Activated CD4-positive, alpha-beta memory T cell treated with anti-CD3 and anti-CD28 coated beads, Interleukin-2, amount 10 ng/mL, durations not matched to agents 7 days and 5 days (primary cell): ENCODE measurements at regions of chr15 and their contacts with region 1.

Region 1: GRCh38 chr15:40307421-40308211 is at the start of gene PLCB2:
- DNase-seq: peak; percentile 78
- H3K4me3 Mint-ChIP-seq: peak within 1 kb of the TSS; percentile 97
- H3K27ac Mint-ChIP-seq: peak within 1 kb of the TSS; percentile 97
- H3K4me1 Mint-ChIP-seq: peaks cover 43% of the 10 kb centered on the region
- H3K27me3 Mint-ChIP-seq: peaks cover 5% of the 10 kb centered on the region
- total RNA-seq, gene PLCB2: 140 TPM

Region 2: DNA sequence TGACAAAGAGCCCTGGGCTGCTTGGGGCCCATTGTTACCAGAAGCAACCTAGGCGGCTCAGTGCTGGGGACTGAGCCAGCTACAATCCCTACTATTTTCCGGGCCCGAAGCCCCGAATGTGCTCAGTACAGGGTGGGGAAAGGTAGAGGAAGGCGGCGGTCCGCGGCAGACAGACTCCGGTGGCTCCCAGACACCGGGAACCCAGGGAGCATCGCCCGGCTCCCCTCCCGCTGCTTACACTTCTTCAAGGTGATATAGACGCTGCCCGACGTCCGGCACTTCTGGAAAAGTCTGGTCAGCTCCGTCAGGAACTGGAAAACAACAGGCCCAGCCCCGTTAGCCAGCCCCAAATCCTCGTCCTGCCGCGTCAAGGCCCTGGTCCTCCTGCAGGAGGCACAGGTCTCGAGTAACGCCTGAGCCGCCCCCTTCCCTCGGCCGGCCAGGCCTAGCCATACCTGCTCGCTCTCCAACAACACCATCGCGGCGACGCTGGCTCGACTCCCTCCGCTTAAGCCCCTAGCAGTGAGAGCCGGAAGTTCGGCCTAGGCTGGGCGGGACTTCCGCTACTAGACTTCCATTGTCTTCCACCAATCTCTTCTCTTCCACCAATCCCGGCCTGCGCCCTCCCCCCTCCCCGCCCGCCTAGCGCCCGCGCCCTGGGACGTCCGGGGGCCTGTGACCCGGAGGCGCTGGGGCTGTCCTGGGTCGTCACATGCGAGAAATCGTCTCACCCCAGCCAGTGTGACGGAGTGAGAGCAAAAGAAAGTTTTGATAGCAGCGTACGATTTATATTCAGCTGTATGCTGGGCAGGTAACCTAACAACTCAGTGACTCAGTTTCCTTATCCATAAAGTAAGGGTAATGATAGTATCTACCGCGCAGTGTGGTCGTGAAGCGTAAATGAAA is 268.7 kb before region 1 on chr15 and contains the start of gene SRP14:
- CTCF ChIA-PET with region 1: interaction called, 4 read pairs
- POLR2A ChIA-PET with region 1: interaction called, 12 read pairs
- DNase-seq: peak; percentile 94
- H3K4me3 Mint-ChIP-seq: peak within 1 kb of the TSS; percentile 100
- H3K27ac Mint-ChIP-seq: peak within 1 kb of the TSS; percentile 95
- H3K4me1 Mint-ChIP-seq: peaks cover 56% of the 10 kb centered on the region
- H3K27me3 Mint-ChIP-seq: no peaks in the 10 kb centered on the region
- total RNA-seq, gene SRP14: 150 to 153 TPM

Region 3: DNA sequence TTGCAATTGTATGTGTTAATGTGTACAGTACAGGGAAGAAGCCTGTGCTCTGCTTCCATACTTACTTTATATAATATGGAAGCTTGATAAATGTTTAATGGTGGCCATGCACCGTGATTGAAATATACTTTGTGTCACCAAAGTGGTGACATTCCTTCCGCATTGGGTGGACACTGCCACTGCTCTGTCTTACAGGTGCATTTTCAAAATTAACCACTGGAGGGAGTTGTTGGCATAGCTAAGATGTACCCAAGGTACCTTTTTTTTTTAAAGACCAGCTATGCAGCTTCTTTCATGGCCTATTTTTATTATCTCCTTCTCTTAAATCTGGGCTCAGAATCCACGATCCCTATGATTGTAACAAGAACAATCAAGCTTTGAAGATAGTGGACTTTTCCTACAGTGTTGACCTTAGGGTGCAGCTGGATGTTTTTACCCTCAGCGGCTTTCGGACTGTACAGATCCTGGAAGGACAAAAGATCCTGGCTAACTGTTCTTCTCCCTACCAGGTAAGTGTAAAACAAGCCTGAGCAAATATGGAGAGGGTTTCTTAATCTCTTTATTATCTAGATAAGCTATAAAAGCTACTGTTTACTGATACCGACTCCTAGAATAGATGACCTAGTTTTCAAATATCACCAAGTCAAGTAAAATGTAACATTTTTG is 90.3 kb before region 1 on chr15:
- CTCF ChIA-PET with region 1: interaction called, 23 read pairs
- POLR2A ChIA-PET with region 1: interaction called, 4 read pairs
- DNase-seq: peak; percentile 32
- H3K4me3 Mint-ChIP-seq: no peak overlapping the region
- H3K27ac Mint-ChIP-seq: no peak overlapping the region
- H3K4me1 Mint-ChIP-seq: no peaks in the 10 kb centered on the region
- H3K27me3 Mint-ChIP-seq: no peaks in the 10 kb centered on the region

Region 4: GRCh38 chr15:40290918-40291574 is 16.6 kb before region 1 on chr15:
- CTCF ChIA-PET with region 1: interaction called, 52 read pairs
- POLR2A ChIA-PET with region 1: interaction called, 28 read pairs
- DNase-seq: no peak
- H3K4me3 Mint-ChIP-seq: no peak overlapping the region
- H3K27ac Mint-ChIP-seq: no peak overlapping the region
- H3K4me1 Mint-ChIP-seq: no peaks in the 10 kb centered on the region
- H3K27me3 Mint-ChIP-seq: no peaks in the 10 kb centered on the region

Region 5: GRCh38 chr15:40330368-40330836 is 22.8 kb after region 1 on chr15:
- CTCF ChIA-PET with region 1: interaction called, 60 read pairs
- POLR2A ChIA-PET with region 1: interaction called, 37 read pairs
- DNase-seq: no peak
- H3K4me3 Mint-ChIP-seq: no peak overlapping the region
- H3K27ac Mint-ChIP-seq: no peak overlapping the region
- H3K4me1 Mint-ChIP-seq: peaks cover 34% of the 10 kb centered on the region
- H3K27me3 Mint-ChIP-seq: peaks cover 2% of the 10 kb centered on the region

Region 6: DNA sequence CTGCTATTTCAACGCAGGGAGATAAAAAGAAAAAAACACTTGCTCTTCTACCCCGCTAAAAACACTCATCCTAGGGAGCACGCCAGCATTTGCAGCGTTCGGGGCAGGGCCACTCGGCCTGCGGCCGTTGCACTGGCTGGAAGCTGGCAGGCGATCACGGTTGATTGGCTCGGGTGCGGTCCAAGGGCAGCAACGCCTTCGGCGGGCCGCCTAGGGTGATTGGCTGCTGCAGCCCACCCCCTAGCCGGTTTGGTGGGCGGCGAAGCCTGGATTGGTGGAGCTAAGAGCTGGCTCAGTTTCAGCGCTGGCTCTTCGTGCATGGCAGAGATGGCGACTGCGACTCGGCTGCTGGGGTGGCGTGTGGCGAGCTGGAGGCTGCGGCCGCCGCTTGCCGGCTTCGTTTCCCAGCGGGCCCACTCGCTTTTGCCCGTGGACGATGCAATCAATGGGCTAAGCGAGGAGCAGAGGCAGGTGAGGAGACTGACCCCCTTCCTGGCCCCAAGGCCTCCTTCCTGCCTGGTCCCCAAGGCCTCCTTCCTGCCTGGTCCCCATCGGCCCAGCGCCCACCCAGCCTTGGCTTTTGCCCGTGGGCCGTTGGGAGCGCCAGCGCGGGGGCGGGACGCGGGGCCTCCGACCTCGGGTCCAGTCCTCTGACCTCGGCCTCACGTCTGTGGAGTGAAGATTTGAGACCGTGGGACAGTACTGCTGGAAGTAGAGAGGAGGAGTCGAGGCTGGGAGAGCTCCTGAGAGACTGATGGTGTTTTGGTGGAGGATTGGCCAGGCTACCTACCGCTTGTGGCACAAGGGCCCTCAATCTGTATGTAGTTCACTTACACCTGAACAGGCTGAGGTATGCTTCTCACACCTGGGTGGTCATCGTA is 98.1 kb after region 1 on chr15 and contains the start of gene IVD:
- CTCF ChIA-PET with region 1: no interaction called
- POLR2A ChIA-PET with region 1: interaction called, 12 read pairs
- DNase-seq: peak; percentile 87
- H3K4me3 Mint-ChIP-seq: peak within 1 kb of the TSS; percentile 76
- H3K27ac Mint-ChIP-seq: peak within 1 kb of the TSS; percentile 81
- H3K4me1 Mint-ChIP-seq: peaks cover 57% of the 10 kb centered on the region
- H3K27me3 Mint-ChIP-seq: no peaks in the 10 kb centered on the region
- total RNA-seq, gene IVD: 38.1 to 38.4 TPM